ENCODE measurements at regions of chr4 and their contacts with region 1.

Region 1: DNA sequence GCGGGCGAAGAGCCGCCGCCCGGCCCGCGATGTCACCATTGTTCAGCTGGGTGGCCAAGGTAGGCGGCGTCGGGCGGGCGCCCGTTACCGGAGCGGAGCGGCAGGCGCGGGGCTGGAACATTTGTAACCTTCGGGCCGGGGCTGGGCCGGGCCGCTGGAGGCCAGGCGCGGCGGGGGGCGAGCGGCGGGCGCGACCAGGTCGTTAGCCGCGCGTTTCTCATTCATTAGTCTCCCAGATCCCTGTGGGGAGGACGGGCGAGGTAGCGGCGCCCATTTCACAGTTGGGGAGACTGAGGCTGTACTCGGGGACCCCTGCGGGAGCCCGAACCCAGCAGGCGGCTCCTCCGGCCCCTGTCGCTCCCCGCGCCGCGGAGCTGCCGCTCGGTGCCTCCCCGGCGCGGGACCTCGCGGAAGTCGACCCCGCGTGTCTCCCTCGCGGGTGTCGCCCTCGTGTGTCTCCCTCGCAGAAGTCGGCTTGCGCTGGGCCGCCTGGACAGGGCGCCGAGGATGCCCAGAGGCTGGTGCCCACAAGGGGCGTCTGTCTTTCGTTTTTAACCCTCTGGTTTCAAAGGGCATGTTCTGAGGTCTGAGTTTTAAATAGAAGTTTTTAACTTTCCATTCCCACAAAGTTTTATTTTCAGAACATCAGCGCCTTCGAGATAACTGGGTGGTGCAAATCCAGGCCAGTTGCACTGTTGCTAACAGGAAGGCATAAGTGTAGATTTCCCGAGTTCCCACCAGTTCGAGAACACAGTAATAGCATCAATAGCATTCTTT is 17.5 kb downstream of the PTTG2 start:
- DNase-seq: peak; percentile 82
- H3K4me3 Mint-ChIP-seq: peak overlapping the region; percentile 75
- H3K27ac Mint-ChIP-seq: peak overlapping the region; percentile 63
- H3K4me1 Mint-ChIP-seq: peaks cover 36% of the 10 kb centered on the region
- H3K27me3 Mint-ChIP-seq: no peaks in the 10 kb centered on the region

Region 2: GRCh38 chr4:37686373-37687193 is 291.1 kb before region 1 on chr4 and contains the start of gene RELL1:
- CTCF ChIA-PET with region 1: no interaction called
- POLR2A ChIA-PET with region 1: no interaction called
- intact Hi-C with region 1: loop called (anchors 1 kb)
- DNase-seq: peak; percentile 100
- H3K4me3 Mint-ChIP-seq: peak within 1 kb of the TSS; percentile 86
- H3K27ac Mint-ChIP-seq: peak within 1 kb of the TSS; percentile 91
- H3K4me1 Mint-ChIP-seq: peaks cover 34% of the 10 kb centered on the region
- H3K27me3 Mint-ChIP-seq: no peaks in the 10 kb centered on the region
- total RNA-seq, gene RELL1: 15.0 to 16.0 TPM

Region 3: DNA sequence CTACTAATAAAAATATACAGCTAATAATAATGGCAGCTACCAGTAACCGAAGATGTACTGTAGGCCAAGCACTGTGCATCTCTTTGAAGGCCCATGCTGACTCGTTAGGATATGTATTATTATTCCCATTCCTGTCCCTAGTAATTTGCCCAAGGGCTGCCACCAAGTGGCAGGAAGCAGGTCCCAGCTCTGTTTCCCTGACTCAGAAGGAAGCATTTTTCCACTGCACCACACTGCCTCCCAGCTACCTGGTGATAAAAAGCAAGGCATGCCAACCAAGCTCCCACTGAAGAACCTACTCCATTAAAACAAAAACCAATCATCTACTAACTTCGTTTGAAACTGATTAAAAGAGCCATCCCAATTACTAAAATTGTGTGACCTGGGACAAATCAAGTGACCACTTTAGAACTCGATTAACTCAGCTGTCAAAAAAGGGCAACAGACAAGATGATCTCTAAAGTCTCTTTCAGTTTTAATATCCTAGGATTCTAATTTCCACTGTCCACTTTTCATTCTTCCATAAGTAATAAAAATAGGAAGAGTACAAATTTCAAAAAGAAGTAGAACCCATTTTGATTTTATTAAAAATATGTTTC is 175.5 kb before region 1 on chr4:
- CTCF ChIA-PET with region 1: interaction called, 5 read pairs
- POLR2A ChIA-PET with region 1: no interaction called
- intact Hi-C with region 1: loop called (anchors 1 kb)
- DNase-seq: no peak
- H3K4me3 Mint-ChIP-seq: no peak overlapping the region
- H3K27ac Mint-ChIP-seq: no peak overlapping the region
- H3K4me1 Mint-ChIP-seq: no peaks in the 10 kb centered on the region
- H3K27me3 Mint-ChIP-seq: no peaks in the 10 kb centered on the region

Region 4: GRCh38 chr4:37826295-37827029 is 151.2 kb before region 1 on chr4 and contains the start of gene PGM2:
- CTCF ChIA-PET with region 1: interaction called, 3 read pairs
- POLR2A ChIA-PET with region 1: no interaction called
- intact Hi-C with region 1: loop called (anchors 2 kb)
- DNase-seq: peak; percentile 93
- H3K4me3 Mint-ChIP-seq: peak within 1 kb of the TSS; percentile 92
- H3K27ac Mint-ChIP-seq: peak within 1 kb of the TSS; percentile 81
- H3K4me1 Mint-ChIP-seq: peaks cover 24% of the 10 kb centered on the region
- H3K27me3 Mint-ChIP-seq: no peaks in the 10 kb centered on the region
- total RNA-seq, gene PGM2: 65.7 to 66.0 TPM

Region 5: DNA sequence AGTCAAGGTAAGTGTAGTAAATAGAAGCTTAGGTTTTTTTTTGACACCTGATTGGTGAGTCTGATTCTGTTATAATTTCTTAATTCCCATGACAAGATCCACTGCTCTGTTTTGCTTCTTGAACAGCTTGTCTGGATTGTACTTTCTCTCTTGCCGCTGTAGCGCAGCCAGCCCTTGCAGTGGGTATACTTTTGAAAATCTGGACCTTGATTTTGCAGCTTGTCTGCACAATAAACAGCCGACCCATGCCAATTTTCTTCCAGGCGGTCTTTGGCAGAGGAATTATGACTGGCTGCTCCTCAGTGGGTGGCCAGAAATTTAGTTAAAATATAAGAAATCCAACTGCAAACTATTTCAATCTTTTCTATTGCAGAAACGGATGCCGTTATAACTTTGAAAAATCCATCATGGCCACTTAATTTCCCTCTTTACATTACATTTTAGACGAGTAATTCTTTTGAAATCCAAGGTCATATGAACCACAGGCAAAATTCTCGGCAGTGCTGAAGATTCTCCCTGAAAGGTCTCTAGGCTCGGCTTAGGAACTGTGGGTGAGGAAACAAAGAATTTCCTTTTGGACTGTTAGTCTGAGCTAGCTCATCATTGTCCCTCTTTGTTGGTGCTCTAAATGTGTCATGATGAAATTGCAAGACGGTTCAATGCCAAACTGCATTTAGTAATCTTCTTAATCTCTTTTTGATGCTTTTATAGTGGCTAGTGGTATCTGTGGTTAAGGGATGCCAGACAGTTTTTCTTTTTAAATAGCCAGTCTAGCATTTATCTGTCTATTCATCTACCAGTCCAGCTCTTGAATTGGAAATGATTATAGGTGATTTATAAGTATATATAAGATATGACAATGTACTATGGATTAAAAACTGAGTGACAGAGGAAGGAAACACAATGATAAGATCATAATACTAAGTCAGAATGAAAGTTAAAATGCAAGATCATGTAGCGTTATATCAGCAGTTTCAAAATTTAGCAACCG is 48.9 kb before region 1 on chr4:
- CTCF ChIA-PET with region 1: interaction called, 3 read pairs
- POLR2A ChIA-PET with region 1: no interaction called
- intact Hi-C with region 1: loop called (anchors 1 kb)
- DNase-seq: no peak
- H3K4me3 Mint-ChIP-seq: no peak overlapping the region
- H3K27ac Mint-ChIP-seq: no peak overlapping the region
- H3K4me1 Mint-ChIP-seq: peaks cover 29% of the 10 kb centered on the region
- H3K27me3 Mint-ChIP-seq: no peaks in the 10 kb centered on the region

Region 6: DNA sequence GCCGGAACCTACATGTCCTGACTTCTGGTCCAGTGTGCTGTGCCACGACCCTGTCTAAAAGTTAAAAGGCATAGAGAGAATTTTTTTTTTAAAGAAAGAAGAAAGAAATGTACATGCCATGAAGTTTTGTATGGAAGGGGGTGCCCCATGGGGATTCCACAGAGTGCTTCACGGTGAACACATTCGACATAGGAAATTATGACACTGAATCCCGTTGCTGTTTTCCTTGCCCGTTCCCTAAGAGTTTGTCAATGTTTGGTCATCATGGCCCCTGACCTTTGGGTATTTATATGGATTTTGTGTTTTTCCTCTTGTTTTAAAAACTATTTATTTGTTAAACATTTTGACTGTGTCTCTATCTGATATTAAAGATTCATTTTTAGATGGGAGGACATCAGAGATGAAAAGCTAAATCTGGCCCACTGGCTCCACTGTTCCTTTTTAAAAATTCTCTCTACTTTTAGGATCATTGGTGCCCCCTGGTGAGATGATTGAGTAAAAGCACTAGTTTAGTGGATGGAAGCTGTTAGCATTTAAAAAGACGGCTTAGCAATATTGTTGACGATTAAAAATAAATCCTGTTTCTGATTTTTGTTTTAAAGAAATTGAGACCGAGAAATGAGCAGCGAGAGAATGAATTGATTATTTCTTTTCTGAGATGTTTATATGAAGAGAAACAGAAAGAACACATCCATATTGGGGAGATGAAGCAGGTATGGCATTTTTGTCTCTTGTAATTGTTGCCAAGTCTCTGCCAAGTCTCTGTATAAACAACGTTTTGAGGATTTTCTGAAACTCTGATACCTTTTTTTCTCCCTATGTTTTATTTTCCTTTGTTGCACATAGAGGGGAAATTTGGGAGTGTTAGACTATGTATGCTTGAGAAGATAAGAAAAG is 57.6 kb after region 1 on chr4:
- CTCF ChIA-PET with region 1: interaction called, 15 read pairs
- POLR2A ChIA-PET with region 1: no interaction called
- intact Hi-C with region 1: no loop called
- DNase-seq: no peak
- H3K4me3 Mint-ChIP-seq: no peak overlapping the region
- H3K27ac Mint-ChIP-seq: no peak overlapping the region
- H3K4me1 Mint-ChIP-seq: no peaks in the 10 kb centered on the region
- H3K27me3 Mint-ChIP-seq: no peaks in the 10 kb centered on the region